ENCODE measurements at regions of chr11 and their contacts with region 1.

Region 1: DNA sequence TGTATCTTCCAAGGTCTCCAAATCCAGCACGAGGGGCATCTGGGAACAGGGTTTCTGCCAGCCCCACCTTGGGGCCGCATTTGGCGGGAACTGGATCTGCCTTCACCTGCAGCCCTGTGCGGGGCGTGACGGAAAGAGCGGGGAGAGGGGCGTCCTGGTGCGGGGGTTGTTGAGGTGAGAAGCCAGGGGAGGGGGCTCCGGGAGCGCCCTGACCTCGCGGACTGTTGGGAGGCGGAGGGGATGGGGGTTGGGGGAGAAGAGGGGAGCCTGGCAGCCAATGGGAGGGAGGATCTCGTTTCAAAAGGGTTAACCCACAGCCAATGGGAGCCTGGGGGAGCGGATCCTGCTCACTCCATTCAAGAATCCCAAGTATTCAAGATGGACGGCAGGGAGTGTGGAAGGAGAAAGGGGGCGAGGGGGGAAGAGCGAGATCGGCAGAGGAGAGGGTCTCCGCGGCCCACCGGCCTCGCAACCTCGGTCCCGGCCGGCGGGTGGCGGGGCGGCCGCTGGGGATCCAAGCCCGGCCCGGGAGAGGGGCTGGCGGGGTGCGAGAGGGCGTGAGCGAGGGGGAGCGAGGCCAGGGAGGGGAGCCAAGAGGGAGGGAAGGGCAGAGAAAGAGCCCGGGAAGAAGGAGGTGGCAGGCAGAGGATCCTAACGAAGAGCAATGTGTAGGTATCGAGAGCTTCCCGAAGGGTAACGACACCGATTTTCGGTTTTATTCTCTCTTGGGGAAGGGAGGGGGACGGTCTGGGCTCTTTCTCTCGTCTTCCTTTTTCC is 11.5 kb downstream of the YPEL4 start:
- DNase-seq: peak; percentile 83
- H3K4me3 ChIP-seq: peak overlapping the region; percentile 68 to 85
- H3K27ac ChIP-seq: peak overlapping the region; percentile 12 to 84
- H3K4me1 ChIP-seq: peaks cover 20% of the 10 kb centered on the region
- H3K27me3 ChIP-seq: no peaks in the 10 kb centered on the region
- CTCF ChIP-seq: no peak
- POLR2A ChIP-seq: no peak

Region 2: GRCh38 chr11:57567515-57568329 is 70.5 kb before region 1 on chr11 and contains the start of gene UBE2L6:
- intact Hi-C with region 1: loop called (anchors 5 kb)
- DNase-seq: peak; percentile 84
- H3K4me3 ChIP-seq: peak within 1 kb of the TSS; percentile 65 to 85
- H3K27ac ChIP-seq: peak within 1 kb of the TSS; percentile 79 to 90
- H3K4me1 ChIP-seq: peaks cover 22% of the 10 kb centered on the region
- H3K27me3 ChIP-seq: no peaks in the 10 kb centered on the region
- CTCF ChIP-seq: peak in 1 of 3 experiments; percentile 86
- POLR2A ChIP-seq: no peak
- total RNA-seq, gene UBE2L6: 13.3 to 19.8 TPM

Region 3: DNA sequence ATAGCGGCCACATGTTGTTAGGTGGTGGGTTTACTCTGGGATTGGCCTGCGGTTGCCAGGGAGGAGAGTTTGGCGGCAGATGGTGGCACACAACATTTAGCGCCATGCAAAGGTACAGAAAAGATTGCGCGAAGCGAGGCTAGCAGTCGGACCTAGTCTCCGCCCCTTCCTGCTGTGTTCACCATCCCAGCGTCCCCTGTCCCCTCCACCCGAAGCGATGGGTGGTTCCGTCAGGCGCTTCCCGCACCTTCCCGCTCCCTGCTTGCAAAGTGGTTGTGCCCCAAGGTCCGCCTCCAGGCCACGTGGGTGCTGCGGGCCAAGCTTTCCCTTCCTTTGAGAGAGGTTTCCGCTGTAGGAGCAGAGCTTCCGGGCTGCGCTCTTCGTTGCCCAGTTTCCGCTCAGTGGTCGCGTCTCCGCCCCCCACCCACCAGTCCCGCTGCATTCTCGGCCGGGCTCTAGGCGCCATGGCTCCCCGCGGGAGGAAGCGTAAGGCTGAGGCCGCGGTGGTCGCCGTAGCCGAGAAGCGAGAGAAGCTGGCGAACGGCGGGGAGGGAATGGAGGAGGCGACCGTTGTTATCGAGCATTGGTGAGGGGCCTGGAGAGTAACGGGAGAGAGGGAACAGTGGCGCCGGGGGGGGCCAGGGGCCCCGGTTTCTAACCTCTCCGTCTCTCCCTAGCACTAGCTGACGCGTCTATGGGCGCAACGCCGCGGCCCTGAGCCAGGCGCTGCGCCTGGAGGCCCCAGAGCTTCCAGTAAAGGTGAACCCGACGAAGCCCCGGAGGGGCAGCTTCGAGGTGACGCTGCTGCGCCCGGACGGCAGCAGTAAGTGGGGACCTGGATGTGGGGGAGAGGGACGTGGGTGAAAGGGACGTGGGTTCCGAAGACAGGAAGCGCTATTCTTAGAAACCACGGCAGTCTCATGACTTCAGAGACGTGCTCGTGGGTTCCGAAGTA is 103.2 kb after region 1 on chr11 and contains the start of gene SELENOH:
- intact Hi-C with region 1: no loop called
- DNase-seq: peak; percentile 97
- H3K4me3 ChIP-seq: peak within 1 kb of the TSS; percentile 73 to 87
- H3K27ac ChIP-seq: peak within 1 kb of the TSS; percentile 89 to 91
- H3K4me1 ChIP-seq: peaks cover 11% of the 10 kb centered on the region
- H3K27me3 ChIP-seq: no peaks in the 10 kb centered on the region
- CTCF ChIP-seq: no peak
- POLR2A ChIP-seq: no peak
- total RNA-seq, gene SELENOH: 157 to 222 TPM

Measured in testis (tissue), 5 donors.